Sciatic nerve (tissue), 2 donors: ENCODE measurements at regions of chr3 and their contacts with region 1.

Region 1: GRCh38 chr3:184496937-184497336 is 64.6 kb upstream of the EPHB3 start:
- DNase-seq: no peak
- ATAC-seq: no peak

Region 2: DNA sequence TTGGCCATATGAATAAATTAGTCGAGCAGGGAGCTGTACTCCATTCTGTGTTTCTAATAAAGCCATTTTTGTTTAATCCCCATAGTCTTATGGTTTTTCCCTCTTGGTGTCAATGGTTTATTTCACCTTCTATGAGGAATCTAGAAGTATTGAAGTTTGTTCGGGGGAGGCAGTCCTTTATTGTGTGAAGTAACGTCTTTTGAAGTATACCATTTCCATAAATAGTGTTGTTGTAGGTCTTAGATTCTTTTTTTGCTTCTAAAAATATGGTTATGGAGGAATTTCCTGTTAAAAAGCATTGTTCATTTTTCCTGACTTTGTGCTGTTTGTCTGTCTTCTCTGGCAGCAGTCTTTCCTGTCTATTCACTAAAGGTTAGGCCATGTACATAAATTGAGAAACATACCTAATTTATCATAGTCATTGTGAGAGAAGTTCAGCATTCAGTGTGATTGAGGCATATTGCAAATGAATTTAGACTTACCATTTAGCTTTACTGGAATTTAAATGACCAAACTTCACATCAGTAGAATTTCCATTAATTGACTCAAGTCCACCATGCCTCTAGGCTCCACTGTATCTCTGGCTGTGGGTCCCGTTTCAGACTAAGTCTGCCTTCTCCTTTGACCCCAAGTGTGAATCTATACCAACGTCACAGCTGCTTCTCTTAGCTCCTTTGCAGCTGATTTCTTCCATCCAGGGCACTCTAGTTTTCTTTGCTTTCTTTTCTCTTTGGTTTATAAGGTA is 762.0 kb before region 1 on chr3:
- intact Hi-C with region 1: no loop called
- DNase-seq: no peak
- ATAC-seq: no peak

Region 3: DNA sequence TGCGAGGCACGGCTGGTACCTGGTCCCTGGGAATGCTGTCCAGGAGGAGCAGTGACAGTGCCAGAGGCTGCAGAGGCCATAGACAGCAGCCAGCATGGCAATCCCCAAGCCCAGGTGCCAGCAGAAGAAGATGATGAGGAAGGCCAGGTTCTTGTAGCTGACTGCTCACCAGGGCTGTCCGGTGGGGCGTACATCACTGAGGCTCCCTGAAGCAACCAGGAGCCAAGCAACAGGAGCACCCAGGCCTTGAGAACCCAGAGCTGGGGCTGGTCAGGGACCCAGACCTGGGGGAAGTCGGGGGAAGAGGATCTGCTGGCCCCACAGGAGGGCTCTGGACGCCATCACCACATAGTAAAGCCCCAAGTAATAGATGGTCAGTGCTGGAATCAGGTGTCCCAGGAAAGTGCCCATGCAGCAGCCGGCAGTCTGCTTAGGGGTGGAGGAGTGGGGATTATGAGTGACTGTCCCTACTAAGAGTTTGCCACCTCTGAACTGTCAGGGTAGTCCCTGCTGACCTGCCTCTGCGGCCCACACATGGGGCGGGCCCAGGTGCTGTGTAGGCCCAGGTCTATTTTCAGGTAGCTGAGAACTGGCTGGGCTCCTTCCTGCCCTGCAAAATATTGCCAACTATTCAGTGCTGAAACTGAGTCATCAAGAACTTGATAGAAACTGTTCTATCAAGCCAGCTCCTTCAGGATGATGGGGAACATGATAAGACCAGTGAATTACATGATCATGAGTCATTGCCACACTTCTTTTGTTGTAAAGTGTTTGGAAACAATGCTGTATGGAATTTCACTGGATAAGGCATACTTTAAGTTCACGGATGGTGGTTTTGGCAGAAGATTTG is 48.4 kb before region 1 on chr3:
- intact Hi-C with region 1: no loop called
- DNase-seq: no peak
- ATAC-seq: no peak

Region 4: DNA sequence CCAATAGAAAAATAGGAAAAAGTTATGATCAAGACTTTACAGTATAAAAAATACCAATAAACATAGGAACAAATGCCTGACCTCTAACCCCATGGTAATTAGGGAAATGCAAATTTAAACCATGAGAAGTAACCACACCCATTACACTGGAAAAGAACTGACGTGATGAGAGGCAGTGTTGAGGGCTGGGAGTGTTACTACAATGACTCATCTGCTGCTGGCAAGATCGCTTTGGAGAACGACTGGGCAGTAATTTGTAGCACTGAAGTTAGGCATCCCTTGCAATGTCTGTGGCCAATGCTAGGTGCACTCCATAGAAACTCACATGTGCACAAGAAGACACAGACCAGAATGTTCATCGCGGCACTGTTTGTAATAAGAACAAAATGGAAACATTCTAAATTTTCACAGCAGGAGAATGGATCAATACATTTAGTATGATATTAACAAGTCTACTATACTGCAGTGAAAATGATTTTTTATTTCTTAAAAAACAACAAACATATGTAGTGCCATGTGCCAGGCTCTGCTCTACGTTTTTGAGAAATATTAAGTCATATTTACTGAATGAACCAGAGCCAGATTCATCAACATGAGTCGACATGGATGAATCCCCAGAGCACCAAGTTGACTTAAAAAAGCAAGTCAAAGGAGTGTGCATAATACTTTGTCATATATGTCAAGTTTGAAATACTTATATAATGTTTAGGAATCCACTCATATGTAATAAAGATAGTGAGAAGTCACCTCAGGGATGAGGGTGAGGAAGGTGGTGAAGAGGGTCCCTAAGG is 27.1 kb after region 1 on chr3:
- intact Hi-C with region 1: loop called (anchors 1 kb)
- DNase-seq: no peak
- ATAC-seq: peak; percentile 36